Cardiac septum (tissue), 1 donor: ENCODE measurements at regions of chr11 and their contacts with region 1.

Region 1: DNA sequence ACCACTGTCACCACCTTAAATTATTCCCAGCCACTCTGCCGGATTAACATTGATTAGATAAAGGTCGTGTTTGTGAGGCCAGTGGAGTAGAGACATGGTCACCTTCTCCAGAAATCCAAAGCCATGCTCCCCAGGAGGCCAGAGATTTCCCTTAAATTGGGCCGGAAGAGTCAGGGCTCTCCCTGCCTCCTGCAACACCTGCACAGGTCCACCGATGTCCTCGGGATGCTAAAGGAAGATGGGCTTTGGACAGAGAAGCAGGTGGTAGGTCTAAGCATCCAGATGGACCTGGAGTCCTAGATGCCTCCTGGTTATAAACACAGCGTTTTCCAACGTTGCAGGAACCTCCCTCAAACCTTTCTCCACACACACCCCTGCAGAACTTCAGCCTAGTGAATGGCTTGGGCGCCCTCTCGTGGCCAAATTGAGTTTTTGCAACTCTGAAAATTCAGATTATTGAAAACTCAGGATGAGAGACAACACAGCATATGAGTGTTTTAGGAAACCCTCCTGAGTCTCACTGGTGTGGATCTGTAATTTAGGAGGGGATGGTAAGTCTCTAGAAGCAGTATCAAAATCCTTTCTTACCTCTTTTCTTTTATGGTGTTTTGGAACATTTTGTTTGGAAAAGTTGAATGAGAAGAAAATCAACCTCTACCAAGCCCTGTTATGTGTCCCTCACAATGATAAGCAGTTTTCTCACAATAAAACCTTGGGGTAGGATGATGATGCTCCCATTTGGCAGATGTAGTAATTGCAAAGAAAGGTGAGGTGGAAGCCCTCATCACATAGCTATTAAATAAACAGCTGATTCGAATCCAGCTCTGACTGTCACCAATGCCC is 109.6 kb downstream of the RRAS2 start:
- DNase-seq: no peak

Region 2: GRCh38 chr11:13772223-13773046 is 476.9 kb before region 1 on chr11:
- intact Hi-C with region 1: loop called (anchors 2 kb)
- DNase-seq: no peak

Region 3: DNA sequence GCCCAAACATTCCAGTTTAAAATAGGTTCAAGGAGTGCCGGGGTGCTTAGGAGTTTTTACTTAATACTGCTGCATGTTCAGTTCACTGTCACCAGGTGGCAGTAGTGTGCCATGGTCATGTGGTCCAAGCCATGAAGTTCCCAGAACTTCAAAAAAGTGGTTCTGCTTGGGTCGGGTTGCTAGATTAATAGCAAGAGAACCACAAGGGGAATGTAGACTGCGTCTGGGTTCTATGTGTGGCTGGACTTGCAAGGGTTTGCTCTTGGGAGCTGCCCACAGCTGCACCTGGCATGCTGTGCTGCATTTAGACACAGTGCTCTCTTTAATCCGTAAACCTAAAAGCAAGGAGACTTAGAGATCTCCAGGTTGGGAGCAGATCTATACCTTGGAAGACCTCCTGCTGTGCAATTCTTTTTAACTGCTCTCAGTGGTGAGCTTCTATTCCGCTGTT is 293.3 kb before region 1 on chr11:
- intact Hi-C with region 1: loop called (anchors 1 kb)
- DNase-seq: peak; percentile 77

Region 4: GRCh38 chr11:14148653-14149273 is 100.6 kb before region 1 on chr11:
- intact Hi-C with region 1: loop called (anchors 5 kb)
- DNase-seq: no peak